Right cardiac atrium (tissue), 5 donors: ENCODE measurements at regions of chr15 and their contacts with region 1.

Region 1: DNA sequence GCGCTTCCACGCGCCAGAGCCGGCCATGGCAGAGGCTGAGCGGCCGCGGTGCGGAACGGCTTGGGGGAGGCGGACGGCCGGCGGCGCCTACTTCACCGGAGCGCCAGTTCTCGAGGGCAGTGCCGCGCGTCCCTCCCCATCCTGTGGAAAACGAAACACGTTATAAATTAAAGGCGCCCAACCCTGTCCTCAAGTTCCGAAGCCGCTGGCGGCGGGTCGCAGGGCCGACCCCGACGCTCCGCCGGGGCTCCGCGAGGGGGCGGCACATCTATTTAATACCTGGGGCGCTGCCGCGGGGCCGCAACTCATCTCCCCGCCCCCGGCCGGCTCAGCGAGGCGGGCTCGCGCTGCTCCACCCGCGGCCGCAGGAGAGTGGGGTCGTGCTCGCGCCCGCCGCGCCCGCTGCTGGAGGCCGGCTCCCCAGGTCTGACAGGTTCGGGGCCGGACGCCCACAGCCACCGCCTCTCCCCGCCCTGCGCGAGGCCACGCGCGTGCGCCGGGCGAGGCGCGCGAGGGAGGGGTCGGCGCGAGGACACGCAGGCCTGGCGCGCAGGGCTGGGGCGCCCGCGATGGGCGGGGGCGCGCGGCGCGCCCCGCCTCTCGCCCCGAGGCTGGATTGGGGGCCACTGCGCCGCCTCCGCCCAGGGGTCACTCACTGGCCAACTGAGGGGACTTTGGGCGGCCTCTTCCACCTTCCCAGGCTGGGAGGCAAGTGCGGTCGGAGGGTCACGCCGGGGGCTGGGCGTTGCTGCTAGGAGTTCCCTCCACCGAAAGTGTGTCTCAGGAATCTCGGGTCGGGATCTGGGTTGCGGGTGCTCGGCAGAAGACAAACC is at the start of gene SLC30A4:
- DNase-seq: peak; percentile 79 to 92 (median 91)
- ATAC-seq: peak; percentile 98
- H3K4me3 ChIP-seq: peak within 1 kb of the TSS; percentile 92
- H3K27ac ChIP-seq: peak within 1 kb of the TSS; percentile 85
- H3K4me1 ChIP-seq: peaks cover 2% of the 10 kb centered on the region
- H3K27me3 ChIP-seq: no peaks in the 10 kb centered on the region
- total RNA-seq, gene SLC30A4: 4.6 to 5.6 (median 5.3) TPM

Region 2: DNA sequence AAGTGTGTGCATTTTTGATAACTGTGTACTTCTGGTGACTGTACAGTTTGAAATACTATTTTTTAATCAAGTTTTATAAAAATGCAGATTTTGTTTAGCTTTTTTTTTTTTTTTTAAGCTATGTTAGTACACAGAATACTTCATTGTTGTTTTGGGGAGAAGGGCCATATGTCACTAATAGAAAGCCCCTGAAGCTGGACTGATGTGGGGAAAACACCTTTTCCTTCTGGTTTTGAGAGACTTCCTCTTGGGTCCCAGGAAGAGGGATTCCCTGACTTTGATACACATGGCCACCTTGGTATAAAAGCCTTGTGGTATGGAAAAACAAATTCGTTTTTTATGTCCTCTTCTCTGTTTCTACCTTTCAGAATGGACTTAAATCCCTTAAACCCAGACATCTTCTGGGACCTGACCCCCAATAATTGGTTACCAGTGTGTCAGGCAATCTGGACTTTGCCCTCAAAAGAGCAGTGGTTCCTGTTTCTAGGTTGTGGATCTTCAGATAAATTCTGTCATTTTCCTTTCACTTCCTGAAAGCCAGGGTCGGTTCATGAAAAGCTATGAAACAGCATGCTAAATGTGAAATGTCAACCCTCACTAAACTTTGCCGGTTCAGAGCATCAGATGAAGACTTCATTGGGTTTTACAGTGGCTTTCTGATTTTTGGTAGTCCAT is 33.5 kb after region 1 on chr15:
- intact Hi-C with region 1: no loop called
- DNase-seq: no peak
- ATAC-seq: no peak
- H3K4me3 ChIP-seq: no peak overlapping the region
- H3K27ac ChIP-seq: no peak overlapping the region
- H3K4me1 ChIP-seq: no peaks in the 10 kb centered on the region
- H3K27me3 ChIP-seq: no peaks in the 10 kb centered on the region

Region 3: GRCh38 chr15:45587095-45587860 is 64.7 kb after region 1 on chr15 and contains the start of gene BLOC1S6:
- intact Hi-C with region 1: loop called in 2 of 4 experiments (anchors 5 to 10 kb)
- DNase-seq: peak; percentile 91 to 96 (median 95)
- ATAC-seq: peak; percentile 94 to 96
- H3K4me3 ChIP-seq: peak within 1 kb of the TSS; percentile 77
- H3K27ac ChIP-seq: peak within 1 kb of the TSS; percentile 94
- H3K4me1 ChIP-seq: peaks cover 4% of the 10 kb centered on the region
- H3K27me3 ChIP-seq: no peaks in the 10 kb centered on the region
- total RNA-seq, gene BLOC1S6: 33.5 to 37.8 (median 35.4) TPM

Region 4: DNA sequence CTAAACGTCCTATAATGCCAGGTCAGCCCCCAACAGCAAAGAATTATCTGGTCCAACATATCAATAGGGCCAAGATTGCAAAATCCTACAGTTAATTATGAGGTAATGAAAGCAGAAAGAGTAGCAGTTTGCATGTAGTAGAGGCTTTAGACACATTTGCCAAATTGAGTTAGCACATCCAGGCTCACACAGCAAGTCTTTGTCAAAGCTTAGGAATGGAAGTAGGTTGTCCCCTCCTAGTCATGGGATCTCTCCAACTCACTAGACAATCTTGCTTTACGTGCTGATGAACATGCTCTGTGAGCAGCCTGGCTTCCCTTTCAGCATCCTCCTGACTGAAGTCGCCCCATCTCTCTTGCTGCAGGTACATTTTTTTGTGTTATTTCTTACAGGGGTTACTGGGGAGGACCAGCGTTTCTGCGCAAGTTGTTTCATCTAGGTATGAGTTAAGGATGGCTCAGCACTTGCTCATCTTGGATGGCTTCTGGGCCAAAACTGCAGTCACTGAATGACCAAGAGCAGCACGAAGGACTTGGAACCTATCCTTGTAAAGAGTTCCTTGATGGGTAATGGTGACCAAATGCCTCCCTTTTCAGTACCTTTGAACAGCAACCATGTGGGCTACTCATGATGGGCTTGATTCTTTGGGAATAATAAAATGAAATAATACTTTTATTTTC is 168.2 kb after region 1 on chr15:
- intact Hi-C with region 1: no loop called
- DNase-seq: no peak
- ATAC-seq: no peak
- H3K4me3 ChIP-seq: no peak overlapping the region
- H3K27ac ChIP-seq: no peak overlapping the region
- H3K4me1 ChIP-seq: no peaks in the 10 kb centered on the region
- H3K27me3 ChIP-seq: no peaks in the 10 kb centered on the region

Region 5: DNA sequence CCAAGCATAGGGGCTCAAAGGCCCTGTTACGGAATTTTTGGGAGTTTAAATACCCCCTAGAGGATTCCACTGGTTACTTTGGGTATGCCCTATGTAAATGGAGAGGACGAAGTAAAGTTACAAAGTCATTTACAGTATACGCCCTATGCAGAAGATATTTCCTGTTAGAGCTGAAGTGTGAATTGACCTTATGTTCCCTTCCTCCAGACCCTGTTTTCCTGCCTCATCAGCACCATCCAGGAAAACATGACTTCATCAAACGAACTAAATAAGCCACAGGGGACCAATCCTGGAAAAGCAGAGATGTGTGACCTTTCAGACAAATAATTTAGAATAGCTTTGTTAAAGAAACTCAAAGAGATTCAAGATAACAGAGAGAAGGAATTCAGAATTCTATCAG is 289.7 kb after region 1 on chr15:
- intact Hi-C with region 1: no loop called
- DNase-seq: no peak
- ATAC-seq: no peak
- H3K4me3 ChIP-seq: no peak overlapping the region
- H3K27ac ChIP-seq: no peak overlapping the region
- H3K4me1 ChIP-seq: no peaks in the 10 kb centered on the region
- H3K27me3 ChIP-seq: no peaks in the 10 kb centered on the region

Region 6: GRCh38 chr15:45884289-45884688 is 361.7 kb after region 1 on chr15:
- intact Hi-C with region 1: no loop called
- DNase-seq: no peak
- ATAC-seq: no peak
- H3K4me3 ChIP-seq: no peak overlapping the region
- H3K27ac ChIP-seq: no peak overlapping the region
- H3K4me1 ChIP-seq: no peaks in the 10 kb centered on the region
- H3K27me3 ChIP-seq: no peaks in the 10 kb centered on the region